Naive thymus-derived CD4-positive, alpha-beta T cell (primary cell): ENCODE measurements at regions of chr12 and their contacts with region 1.

Region 1: GRCh38 chr12:19186722-19187661 is 57.5 kb downstream of the PLEKHA5 start:
- DNase-seq: peak in 2 of 9 donors; percentile 4 to 19
- ATAC-seq: no peak
- H3K4me3 ChIP-seq: no peak overlapping the region
- H3K4me3 Mint-ChIP-seq: no peak overlapping the region
- H3K27ac ChIP-seq: no peak overlapping the region
- H3K27ac Mint-ChIP-seq: no peak overlapping the region
- H3K4me1 ChIP-seq: no peaks in the 10 kb centered on the region
- H3K4me1 Mint-ChIP-seq: peaks cover 0 to 2% (median 0%) of the 10 kb centered on the region in 7 donors
- H3K27me3 ChIP-seq: no peaks in the 10 kb centered on the region
- H3K27me3 Mint-ChIP-seq: peaks cover 0 to 21% (median 7%) of the 10 kb centered on the region in 5 donors

Region 2: GRCh38 chr12:18139989-18140596 is 1046.9 kb before region 1 on chr12:
- CTCF ChIA-PET with region 1: no interaction called
- POLR2A ChIA-PET with region 1: no interaction called
- intact Hi-C with region 1: loop called (anchors 2 to 5 kb)
- DNase-seq: no peak
- ATAC-seq: no peak
- H3K4me3 ChIP-seq: no peak overlapping the region
- H3K4me3 Mint-ChIP-seq: no peak overlapping the region
- H3K27ac ChIP-seq: no peak overlapping the region
- H3K27ac Mint-ChIP-seq: no peak overlapping the region
- H3K4me1 ChIP-seq: no peaks in the 10 kb centered on the region
- H3K4me1 Mint-ChIP-seq: no peaks in the 10 kb centered on the region
- H3K27me3 ChIP-seq: no peaks in the 10 kb centered on the region
- H3K27me3 Mint-ChIP-seq: no peaks in the 10 kb centered on the region

Region 3: DNA sequence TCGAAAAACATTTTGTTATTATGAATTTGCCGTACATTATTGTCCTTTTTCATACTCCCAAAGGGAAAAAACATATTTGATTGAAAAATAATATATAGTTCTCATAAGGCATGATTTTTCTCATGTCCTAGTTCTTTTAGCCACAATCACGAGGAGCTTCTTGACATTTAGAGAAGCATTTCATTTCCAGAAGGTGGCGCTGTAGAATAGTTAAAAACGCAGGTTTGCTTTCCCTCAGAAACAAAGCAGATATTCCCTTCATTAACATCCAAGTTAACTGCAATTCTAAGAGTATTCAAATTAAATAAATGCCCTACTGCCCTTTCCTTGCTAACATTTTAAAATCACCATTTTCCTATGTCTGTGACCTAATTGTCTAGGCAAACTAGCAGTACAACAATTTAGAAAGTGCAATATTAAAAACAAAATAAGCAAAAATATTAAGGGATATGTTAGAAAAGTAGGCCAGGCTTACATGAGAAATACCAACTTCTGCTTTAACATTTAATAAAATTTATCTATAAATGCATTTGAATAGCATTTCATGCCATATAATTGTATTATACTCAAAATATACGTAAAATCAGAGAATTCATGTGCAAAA is 936.6 kb before region 1 on chr12:
- CTCF ChIA-PET with region 1: no interaction called
- POLR2A ChIA-PET with region 1: no interaction called
- intact Hi-C with region 1: loop called in 1 of 2 experiments (anchors 1 kb)
- DNase-seq: no peak
- ATAC-seq: no peak
- H3K4me3 ChIP-seq: no peak overlapping the region
- H3K4me3 Mint-ChIP-seq: no peak overlapping the region
- H3K27ac ChIP-seq: no peak overlapping the region
- H3K27ac Mint-ChIP-seq: no peak overlapping the region
- H3K4me1 ChIP-seq: no peaks in the 10 kb centered on the region
- H3K4me1 Mint-ChIP-seq: no peaks in the 10 kb centered on the region
- H3K27me3 ChIP-seq: no peaks in the 10 kb centered on the region
- H3K27me3 Mint-ChIP-seq: no peaks in the 10 kb centered on the region

Region 4: GRCh38 chr12:18430425-18431048 is 756.5 kb before region 1 on chr12:
- CTCF ChIA-PET with region 1: no interaction called
- POLR2A ChIA-PET with region 1: no interaction called
- intact Hi-C with region 1: loop called in 1 of 2 experiments (anchors 5 kb)
- DNase-seq: no peak
- ATAC-seq: no peak
- H3K4me3 ChIP-seq: no peak overlapping the region
- H3K4me3 Mint-ChIP-seq: no peak overlapping the region
- H3K27ac ChIP-seq: no peak overlapping the region
- H3K27ac Mint-ChIP-seq: no peak overlapping the region
- H3K4me1 ChIP-seq: no peaks in the 10 kb centered on the region
- H3K4me1 Mint-ChIP-seq: no peaks in the 10 kb centered on the region
- H3K27me3 ChIP-seq: no peaks in the 10 kb centered on the region
- H3K27me3 Mint-ChIP-seq: no peaks in the 10 kb centered on the region

Region 5: DNA sequence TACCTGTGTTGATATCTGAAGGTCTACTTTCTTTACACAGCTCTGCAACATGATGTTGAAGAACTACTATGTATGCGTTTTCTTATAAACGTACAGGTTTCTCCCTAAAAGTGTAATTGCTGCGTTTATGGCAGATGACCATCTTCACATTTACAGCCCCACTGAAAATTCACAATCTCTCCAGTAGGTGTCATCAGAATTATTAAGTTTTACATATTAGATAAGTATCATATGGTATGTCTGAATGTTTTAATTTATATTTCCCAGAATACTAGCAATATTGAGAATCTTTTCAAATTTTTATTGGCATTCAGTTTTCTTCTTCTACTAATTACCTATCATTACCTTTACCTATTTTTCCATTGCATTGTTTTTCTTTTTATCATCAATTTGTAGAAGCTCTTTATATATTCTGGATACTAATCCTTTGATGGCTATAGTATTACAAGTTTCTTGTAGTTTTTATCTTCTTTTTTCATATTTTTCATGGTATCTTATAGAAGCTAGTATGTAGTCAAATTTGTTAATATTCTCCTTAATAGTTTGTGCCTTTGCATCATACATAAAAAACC is 325.6 kb before region 1 on chr12:
- CTCF ChIA-PET with region 1: no interaction called
- POLR2A ChIA-PET with region 1: no interaction called
- intact Hi-C with region 1: loop called in 1 of 2 experiments (anchors 1 kb)
- DNase-seq: no peak
- ATAC-seq: no peak
- H3K4me3 ChIP-seq: no peak overlapping the region
- H3K4me3 Mint-ChIP-seq: no peak overlapping the region
- H3K27ac ChIP-seq: no peak overlapping the region
- H3K27ac Mint-ChIP-seq: no peak overlapping the region
- H3K4me1 ChIP-seq: no peaks in the 10 kb centered on the region
- H3K4me1 Mint-ChIP-seq: no peaks in the 10 kb centered on the region
- H3K27me3 ChIP-seq: no peaks in the 10 kb centered on the region
- H3K27me3 Mint-ChIP-seq: peaks cover 0 to 5% (median 0%) of the 10 kb centered on the region in 5 donors

Region 6: GRCh38 chr12:19288603-19289244 is 101.7 kb after region 1 on chr12:
- CTCF ChIA-PET with region 1: no interaction called
- POLR2A ChIA-PET with region 1: no interaction called
- intact Hi-C with region 1: loop called (anchors 2 to 5 kb)
- DNase-seq: peak in 2 of 9 donors; percentile 8 to 12
- ATAC-seq: no peak
- H3K4me3 ChIP-seq: no peak overlapping the region
- H3K4me3 Mint-ChIP-seq: no peak overlapping the region
- H3K27ac ChIP-seq: no peak overlapping the region
- H3K27ac Mint-ChIP-seq: no peak overlapping the region
- H3K4me1 ChIP-seq: no peaks in the 10 kb centered on the region
- H3K4me1 Mint-ChIP-seq: no peaks in the 10 kb centered on the region
- H3K27me3 ChIP-seq: no peaks in the 10 kb centered on the region
- H3K27me3 Mint-ChIP-seq: peaks cover 0 to 4% (median 0%) of the 10 kb centered on the region in 5 donors

Region 7: GRCh38 chr12:19388131-19388549 is 201.1 kb after region 1 on chr12:
- CTCF ChIA-PET with region 1: no interaction called
- POLR2A ChIA-PET with region 1: no interaction called
- intact Hi-C with region 1: no loop called
- DNase-seq: no peak
- ATAC-seq: no peak
- H3K4me3 ChIP-seq: no peak overlapping the region
- H3K4me3 Mint-ChIP-seq: no peak overlapping the region
- H3K27ac ChIP-seq: no peak overlapping the region
- H3K27ac Mint-ChIP-seq: no peak overlapping the region
- H3K4me1 ChIP-seq: no peaks in the 10 kb centered on the region
- H3K4me1 Mint-ChIP-seq: no peaks in the 10 kb centered on the region
- H3K27me3 ChIP-seq: no peaks in the 10 kb centered on the region
- H3K27me3 Mint-ChIP-seq: no peaks in the 10 kb centered on the region